Left cardiac atrium (tissue), 4 donors: ENCODE measurements at regions of chr1 and their contacts with region 1.

Region 1: DNA sequence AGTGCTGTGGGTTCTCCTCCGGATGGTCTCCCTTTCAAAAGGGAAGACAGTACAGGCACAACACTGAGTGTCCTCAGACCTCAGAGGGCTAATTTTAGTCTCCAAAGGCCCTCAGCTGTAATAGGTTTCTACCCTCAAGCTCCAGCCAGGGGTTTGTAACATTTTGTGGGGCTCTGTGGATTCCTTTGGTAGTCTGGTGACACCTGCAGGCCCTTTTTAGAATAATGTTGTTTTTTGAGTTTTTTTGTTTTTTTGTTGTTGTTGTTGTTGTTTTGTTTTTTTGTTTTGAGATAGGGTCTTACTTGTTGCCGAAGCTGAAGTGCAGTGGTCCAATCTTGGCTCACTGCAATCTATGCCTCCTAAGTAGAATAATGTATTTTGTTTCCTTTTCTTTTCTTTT is 15.0 kb upstream of the TMEM201 start:
- DNase-seq: no peak
- ATAC-seq: peak; percentile 54

Region 2: DNA sequence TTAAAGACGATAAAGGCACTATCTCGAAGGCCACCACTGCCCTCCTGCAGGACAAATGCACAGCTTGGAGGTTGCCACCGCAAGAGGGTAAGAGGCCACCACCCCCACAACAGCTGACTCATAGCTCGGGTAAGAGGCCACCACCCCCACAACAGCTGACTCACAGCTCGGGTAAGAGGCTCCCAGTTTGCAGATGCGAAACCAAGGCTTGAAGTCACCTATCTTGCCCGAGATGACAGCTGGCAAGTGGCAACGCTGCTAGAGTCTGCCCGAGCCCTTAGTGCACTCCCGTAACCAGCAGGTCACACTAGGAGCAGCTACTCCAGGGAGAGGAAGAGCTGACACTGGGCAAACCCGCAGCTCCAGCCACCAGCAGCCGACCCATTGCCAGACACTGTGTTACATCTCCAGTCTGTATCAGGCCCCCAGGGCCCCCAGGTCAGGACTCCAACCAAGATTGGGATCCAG is 298.1 kb before region 1 on chr1:
- intact Hi-C with region 1: loop called in 1 of 2 experiments (anchors 10 kb)
- DNase-seq: peak; percentile 60
- ATAC-seq: peak in 1 of 2 donors; percentile 67